ENCODE measurements at regions of chr9 and their contacts with region 1.

Region 1: DNA sequence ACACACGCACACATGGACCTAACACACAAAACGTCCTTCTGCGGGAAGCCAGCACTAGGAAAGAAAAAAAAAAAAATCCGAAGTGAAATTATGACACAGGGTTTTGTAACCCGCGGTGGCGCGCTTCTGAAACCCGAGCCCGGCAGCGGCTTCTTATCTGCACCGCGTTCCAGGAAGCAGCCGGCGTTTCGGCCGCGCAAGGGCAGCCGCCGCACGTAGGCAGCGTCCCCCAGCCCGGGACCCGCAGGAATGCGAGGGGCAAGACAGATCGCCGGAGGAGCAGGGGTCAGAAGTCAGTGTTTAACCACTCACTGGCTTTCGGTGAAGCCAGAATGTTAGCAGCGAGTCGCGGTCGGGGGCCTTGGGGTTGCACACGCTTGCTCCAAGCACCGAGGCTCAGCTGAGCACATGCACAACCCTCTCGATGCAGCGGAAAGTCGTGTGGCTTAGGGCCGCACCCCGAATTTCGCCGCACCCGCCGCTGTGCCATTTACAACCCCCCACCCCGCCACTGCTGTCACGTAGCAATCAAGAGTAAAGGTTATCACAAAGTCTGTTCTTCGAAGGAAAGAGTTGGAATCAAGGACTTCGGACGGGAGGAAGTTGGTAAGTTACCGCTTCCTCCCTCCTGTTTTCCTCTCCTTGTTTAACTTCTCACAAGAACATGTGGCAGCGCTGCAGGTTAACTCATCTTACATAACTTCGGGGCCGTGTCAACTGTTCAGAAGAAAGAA is 167.9 kb downstream of the AUH start:
- DNase-seq: peak; percentile 95
- ATAC-seq: peak; percentile 72

Region 2: GRCh38 chr9:90851444-90851843 is 342.4 kb before region 1 on chr9:
- intact Hi-C with region 1: no loop called
- DNase-seq: no peak
- ATAC-seq: no peak

Region 3: GRCh38 chr9:90921111-90921510 is 272.7 kb before region 1 on chr9:
- intact Hi-C with region 1: loop called (anchors 2 kb)
- DNase-seq: peak; percentile 88
- ATAC-seq: peak; percentile 95

Region 4: GRCh38 chr9:91101611-91102168 is 92.1 kb before region 1 on chr9:
- intact Hi-C with region 1: loop called (anchors 2 kb)
- DNase-seq: no peak
- ATAC-seq: no peak

Region 5: DNA sequence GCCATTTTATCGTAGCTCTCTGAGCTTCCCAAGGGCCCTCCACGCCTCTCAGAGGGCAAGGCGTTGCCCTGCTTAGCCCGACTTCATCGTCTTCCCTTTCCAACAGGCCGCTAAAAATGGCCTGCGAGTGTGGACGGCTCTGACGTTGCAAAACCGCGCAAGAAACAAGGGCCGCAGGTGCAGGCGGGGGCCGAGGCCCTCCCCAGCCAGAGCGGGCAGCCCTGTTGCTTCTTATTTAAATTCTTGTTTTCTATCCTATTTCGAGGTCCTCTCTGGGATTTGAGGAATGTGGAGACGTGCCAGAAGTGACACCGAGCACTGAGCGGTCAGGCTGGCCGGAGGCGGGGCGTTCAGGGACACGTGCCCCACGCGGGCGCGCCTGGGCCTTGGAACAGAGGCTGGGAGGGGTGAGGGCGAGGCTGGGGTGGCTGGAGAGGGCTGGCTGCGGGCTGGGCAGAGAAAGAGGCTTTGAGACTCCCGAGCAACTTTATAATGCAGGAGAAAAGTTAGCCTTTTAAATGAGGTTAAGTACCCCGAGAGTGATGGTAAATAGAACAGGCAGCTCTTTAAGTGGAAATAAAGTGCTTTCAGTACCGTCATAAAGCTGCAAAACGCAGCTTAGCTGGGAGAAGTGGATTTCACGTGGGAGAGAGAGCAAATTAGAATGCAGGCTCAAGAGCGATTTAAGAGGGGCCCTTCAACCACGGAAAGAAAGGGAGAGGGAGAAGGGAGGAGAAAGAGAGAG is 75.7 kb before region 1 on chr9:
- intact Hi-C with region 1: loop called (anchors 5 kb)
- DNase-seq: peak; percentile 94
- ATAC-seq: peak; percentile 97

Region 6: GRCh38 chr9:91245431-91246313 is 51.8 kb after region 1 on chr9:
- intact Hi-C with region 1: no loop called
- DNase-seq: no peak
- ATAC-seq: no peak

Region 7: GRCh38 chr9:91361291-91362050 is 167.6 kb after region 1 on chr9 and contains the start of gene AUH:
- intact Hi-C with region 1: loop called (anchors 5 kb)
- DNase-seq: peak; percentile 95
- ATAC-seq: peak; percentile 98
- total RNA-seq, gene AUH: 37.9 TPM